Esophagus squamous epithelium (tissue), 5 donors: ENCODE measurements at regions of chr6 and their contacts with region 1.

Region 1: DNA sequence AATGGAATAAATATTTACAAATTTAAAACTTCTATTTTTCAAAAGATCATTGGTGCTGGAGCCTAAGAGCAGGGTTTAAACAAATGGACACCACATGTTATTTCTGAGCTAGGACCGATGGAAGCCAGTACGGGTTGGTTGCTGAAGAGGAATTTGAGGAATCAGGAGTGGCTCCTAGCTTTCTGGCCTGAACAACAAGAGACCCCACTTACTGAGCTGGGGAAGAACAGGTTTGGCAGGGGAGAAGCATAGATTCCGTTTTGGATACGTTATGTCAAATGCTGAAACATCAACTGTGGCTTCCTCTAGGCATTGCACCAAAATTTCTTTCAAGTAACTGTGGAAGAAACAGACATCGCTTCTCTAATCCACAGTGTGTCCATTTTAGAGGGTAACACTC is 6.7 kb downstream of the WDR27 start:
- DNase-seq: no peak
- H3K4me3 ChIP-seq: no peak overlapping the region
- H3K27ac ChIP-seq: no peak overlapping the region
- H3K4me1 ChIP-seq: peaks cover 4 to 31% (median 20%) of the 10 kb centered on the region in 3 donors
- H3K27me3 ChIP-seq: no peaks in the 10 kb centered on the region
- CTCF ChIP-seq: no peak
- POLR2A ChIP-seq: no peak

Region 2: DNA sequence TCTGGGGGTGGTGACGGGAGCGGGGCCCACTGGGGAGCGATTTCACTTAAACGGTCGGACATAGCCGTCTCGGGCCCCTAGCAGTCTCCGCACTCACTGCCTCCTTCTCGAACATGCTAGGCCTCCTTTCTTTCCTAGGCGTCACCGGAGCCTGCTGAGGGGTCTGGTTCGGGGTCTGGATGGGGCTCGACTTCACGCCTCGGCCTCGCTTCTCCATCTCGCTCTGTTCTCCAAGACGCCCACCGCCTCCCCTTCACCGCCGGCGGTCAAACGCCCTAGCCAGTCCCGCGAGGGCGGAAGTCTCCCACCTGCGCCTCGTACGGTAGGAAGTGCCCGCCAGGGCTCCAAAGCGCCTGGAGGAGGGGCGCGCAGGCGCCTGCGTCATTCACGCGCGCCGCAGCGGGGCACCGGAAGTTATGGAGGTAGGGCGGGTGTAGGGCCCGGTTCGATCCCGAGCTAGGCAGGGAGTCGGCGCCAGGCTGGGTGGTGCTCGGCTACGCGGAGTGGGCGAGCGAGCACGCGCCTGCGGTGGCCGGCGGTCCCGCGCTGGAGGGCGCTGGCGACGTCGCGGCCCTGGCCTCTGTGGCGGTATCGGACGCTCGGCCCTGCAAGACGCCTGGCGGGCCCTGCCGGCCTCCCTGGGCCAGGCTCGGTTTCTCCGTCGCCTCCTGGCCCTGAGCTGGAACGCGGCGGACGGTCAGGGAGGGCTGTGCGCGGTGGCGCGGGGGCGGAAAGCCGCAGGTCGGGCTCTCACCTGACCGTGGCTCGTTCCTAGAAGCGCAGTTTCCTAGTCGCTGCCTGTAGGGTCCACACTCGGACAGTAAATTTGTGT is 56.3 kb after region 1 on chr6 and contains the starts of genes DYNLT2 and ERMARD:
- intact Hi-C with region 1: loop called (anchors 5 kb)
- DNase-seq: peak; percentile 63
- H3K4me3 ChIP-seq: peak within 1 kb of the TSS; percentile 86 to 98 (median 92)
- H3K27ac ChIP-seq: peak within 1 kb of the TSS; percentile 97 to 99 (median 98)
- H3K4me1 ChIP-seq: peaks cover 3 to 29% (median 17%) of the 10 kb centered on the region in 3 donors
- H3K27me3 ChIP-seq: no peaks in the 10 kb centered on the region
- CTCF ChIP-seq: peak in 4 of 6 experiments; percentile 35 to 60 (median 51)
- POLR2A ChIP-seq: peak in 3 of 4 donors; percentile 78 to 90 (median 88)
- total RNA-seq, gene DYNLT2: 0.94 to 3.1 (median 1.4) TPM
- total RNA-seq, gene ERMARD: 10.3 to 21.4 (median 17.6) TPM